AG04450 (cell line): ENCODE measurements at regions of chr3 and their contacts with region 1.

Region 1: DNA sequence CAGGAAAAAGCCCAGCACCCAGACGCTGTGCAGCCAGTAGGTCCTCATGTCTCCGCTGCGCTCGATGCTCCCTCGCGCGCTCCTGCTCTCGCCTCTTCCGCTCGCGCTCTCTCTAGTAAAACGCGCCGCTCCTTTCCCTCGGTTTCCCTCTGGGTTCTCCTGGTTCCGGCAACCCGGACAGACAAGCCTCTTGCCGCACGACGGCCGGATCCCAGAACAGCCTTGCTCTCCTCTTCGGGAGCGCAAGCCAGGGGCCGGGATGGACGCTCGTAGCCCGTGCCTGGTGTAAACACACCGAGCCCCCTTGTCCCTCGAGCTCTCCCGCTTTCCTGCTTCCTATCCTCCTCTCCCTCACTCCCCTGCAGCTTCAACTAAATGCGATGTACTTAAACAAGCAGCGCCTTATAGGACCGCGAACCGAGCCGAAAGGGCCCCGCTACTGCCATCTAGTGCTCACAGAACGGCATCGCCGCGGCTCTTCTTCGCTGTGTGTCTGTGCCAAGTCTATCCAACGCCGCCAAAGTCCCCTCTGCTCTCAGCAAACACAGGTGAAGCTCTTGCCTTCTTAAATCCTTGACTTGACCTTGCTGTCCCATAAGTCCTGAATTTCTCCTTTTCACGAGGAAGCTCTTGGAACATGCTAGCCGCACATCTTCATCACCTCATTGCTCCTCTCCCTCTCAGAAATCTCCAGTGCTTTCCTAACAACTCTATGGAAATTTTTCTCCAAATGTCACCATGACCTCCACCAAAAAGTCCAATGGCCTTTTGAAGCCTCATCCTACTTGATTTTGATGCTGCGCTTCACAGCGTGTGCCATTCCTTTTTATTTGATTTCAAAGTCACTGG is 1037.2 kb downstream of the IGSF11 start:
- DNase-seq: peak; percentile 70
- H3K4me3 ChIP-seq: peak overlapping the region; percentile 96
- H3K27ac ChIP-seq: peak overlapping the region; percentile 13
- H3K27me3 ChIP-seq: no peaks in the 10 kb centered on the region
- CTCF ChIP-seq: peak; percentile 98

Region 2: DNA sequence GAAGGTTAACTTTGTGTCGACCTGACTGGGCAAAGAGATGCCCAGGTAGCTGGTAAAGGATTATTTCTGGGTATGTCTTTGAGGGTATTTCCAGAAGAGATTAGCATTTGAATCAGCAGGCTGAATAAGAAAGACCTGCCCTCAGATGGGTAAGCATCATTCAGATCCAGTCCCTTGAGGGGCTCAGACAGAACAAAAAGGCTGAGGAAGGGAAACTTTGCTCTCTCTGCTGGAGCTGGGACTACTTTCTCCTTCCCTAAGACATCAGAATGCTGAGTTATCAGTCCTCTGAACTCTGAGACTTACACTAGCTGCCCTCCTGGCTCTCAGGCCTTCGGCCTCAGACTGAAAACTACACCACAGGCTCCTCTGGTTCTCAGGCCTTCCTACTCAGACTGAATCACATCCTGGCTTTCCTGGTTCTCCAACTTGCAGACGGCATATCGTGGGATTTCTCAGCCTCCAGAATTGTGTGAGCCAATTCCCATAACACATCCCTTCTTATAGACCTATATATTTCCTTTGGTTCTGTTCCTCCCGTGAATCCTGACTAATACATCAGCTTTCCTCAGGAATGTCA is 304.9 kb before region 1 on chr3:
- CTCF ChIA-PET with region 1: interaction called, 13 read pairs
- POLR2A ChIA-PET with region 1: no interaction called
- DNase-seq: peak; percentile 50
- H3K4me3 ChIP-seq: no peak overlapping the region
- H3K27ac ChIP-seq: peak overlapping the region; percentile 81
- H3K27me3 ChIP-seq: no peaks in the 10 kb centered on the region
- CTCF ChIP-seq: no peak

Region 3: GRCh38 chr3:117836296-117836695 is 161.1 kb before region 1 on chr3:
- CTCF ChIA-PET with region 1: interaction called, 6 read pairs
- POLR2A ChIA-PET with region 1: interaction called, 11 read pairs
- DNase-seq: no peak
- H3K4me3 ChIP-seq: no peak overlapping the region
- H3K27ac ChIP-seq: no peak overlapping the region
- H3K27me3 ChIP-seq: no peaks in the 10 kb centered on the region
- CTCF ChIP-seq: no peak

Region 4: GRCh38 chr3:117977504-117978228 is 19.8 kb before region 1 on chr3:
- CTCF ChIA-PET with region 1: interaction called, 17 read pairs
- POLR2A ChIA-PET with region 1: no interaction called
- DNase-seq: no peak
- H3K4me3 ChIP-seq: no peak overlapping the region
- H3K27ac ChIP-seq: no peak overlapping the region
- H3K27me3 ChIP-seq: no peaks in the 10 kb centered on the region
- CTCF ChIP-seq: no peak

Region 5: DNA sequence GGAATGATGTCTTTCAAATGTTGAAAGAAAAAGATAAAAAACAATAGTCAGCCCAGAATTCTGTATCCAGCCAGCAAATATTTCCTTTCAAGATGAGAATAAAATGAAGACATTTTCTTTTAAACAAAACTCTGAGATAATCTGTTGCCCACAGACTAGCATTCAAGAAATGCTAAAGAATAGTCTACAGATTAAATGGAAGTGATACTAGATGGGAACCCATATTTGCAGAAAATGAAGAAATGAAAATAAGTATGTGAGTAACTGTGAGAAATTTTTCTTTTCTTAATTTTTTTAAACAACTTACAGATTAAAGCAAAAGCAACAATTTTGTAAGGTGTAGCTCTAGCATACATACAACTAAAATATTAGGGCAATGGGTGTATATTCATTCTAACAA is 567.4 kb after region 1 on chr3:
- CTCF ChIA-PET with region 1: no interaction called
- POLR2A ChIA-PET with region 1: no interaction called
- DNase-seq: no peak
- H3K4me3 ChIP-seq: no peak overlapping the region
- H3K27ac ChIP-seq: no peak overlapping the region
- H3K27me3 ChIP-seq: no peaks in the 10 kb centered on the region
- CTCF ChIP-seq: no peak